GM12878 (cell line): ENCODE measurements at regions of chr10 and their contacts with region 1.

Region 1: DNA sequence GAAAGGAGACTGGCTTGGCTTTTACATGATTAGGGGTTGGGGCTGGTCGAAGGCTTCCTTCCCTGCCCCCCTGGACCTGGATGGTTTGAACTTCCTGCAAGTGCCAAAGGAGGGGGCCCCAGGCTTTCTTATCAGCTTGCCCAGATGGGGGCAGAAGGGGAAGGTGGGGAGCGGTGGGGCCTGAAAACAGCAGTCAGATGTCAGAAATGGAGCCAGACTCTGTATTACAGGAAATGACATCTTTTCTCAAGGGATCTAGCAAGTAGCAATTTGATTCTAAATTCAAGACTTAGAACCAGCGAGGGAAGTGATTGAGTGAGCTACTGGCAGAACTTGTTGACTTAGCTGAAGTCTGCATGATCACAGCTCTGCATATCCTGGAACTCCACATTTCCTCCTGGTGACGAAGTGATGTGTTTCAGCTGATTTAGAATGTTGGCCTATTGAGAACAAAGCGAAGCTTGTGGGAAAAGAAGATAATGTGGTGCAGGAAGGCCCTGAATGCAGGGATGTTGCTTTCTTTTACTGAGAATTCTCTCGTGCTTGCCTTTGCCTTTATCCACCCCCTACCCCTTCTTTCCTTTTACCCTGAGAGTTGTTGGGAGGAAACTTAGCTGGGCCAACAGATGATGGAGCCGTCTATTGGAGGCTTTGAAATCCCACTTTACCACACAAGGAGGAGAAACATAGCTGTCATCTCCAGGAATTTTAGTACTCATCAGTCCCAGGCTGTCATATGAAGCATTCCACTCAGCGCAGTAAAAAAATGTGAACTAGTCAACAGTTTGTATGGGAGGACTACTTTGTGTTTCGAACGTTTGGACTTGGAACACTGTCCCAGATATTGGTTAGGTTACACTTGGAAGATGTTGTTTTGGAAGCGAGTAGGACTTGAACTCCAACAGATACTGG is 43.2 kb downstream of the CCNY start:
- DNase-seq: peak; percentile 60
- ATAC-seq: peak; percentile 90
- H3K4me3 ChIP-seq: peak overlapping the region; percentile 46; the same call in 1 of the 2 replicates
- H3K27ac ChIP-seq: peak overlapping the region; percentile 67
- H3K4me1 ChIP-seq: peaks cover 20% of the 10 kb centered on the region
- H3K27me3 ChIP-seq: no peaks in the 10 kb centered on the region
- CTCF ChIP-seq: peak; percentile 30 to 45 (median 41); a peak in 4 of 6 replicates
- EP300 ChIP-seq: 0 out of 4 replicates have a peak, but pooled peaks of 1 of the 2 experiments have one; percentile 11
- POLR2A ChIP-seq: no peak
- RAD21 ChIP-seq: peak; percentile 89

Region 2: GRCh38 chr10:35244549-35244948 is 134.9 kb before region 1 on chr10:
- CTCF ChIA-PET with region 1: interaction called, 6 read pairs
- POLR2A ChIA-PET with region 1: no interaction called
- RAD21 ChIA-PET with region 1: no interaction called
- SMC1A ChIA-PET with region 1: interaction called, 4 read pairs
- in situ Hi-C with region 1: no loop called
- intact Hi-C with region 1: loop called (anchors 5 kb)
- DNase-seq: no peak
- ATAC-seq: no peak
- H3K4me3 ChIP-seq: no peak overlapping the region
- H3K27ac ChIP-seq: no peak overlapping the region
- H3K4me1 ChIP-seq: no peaks in the 10 kb centered on the region
- H3K27me3 ChIP-seq: no peaks in the 10 kb centered on the region
- CTCF ChIP-seq: no peak
- EP300 ChIP-seq: no peak
- POLR2A ChIP-seq: no peak
- RAD21 ChIP-seq: no peak

Region 3: DNA sequence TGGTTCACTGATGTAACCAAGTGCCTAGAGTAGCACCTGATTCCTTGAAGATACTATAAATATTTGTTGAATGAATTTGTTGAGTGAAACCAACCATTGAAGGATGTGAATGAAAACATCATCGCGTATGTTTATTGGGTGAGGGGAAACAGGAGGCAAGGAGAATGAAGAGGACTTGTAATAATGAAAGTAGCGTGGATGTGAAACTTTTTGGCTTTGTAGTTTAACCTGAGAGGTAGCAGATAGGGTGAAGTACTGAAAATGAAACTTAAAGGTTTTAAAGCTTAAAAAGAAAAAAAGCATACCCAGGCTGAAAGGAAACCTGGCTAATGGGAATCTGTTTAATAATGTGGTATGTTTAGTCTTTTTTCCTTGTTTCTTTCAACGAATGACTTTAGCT is 38.0 kb before region 1 on chr10:
- CTCF ChIA-PET with region 1: interaction called, 3 read pairs
- POLR2A ChIA-PET with region 1: no interaction called
- RAD21 ChIA-PET with region 1: interaction called, 3 read pairs
- SMC1A ChIA-PET with region 1: interaction called, 9 read pairs
- in situ Hi-C with region 1: no loop called
- intact Hi-C with region 1: loop called (anchors 1 kb)
- DNase-seq: peak; percentile 80
- ATAC-seq: peak; percentile 80
- H3K4me3 ChIP-seq: peak overlapping the region; percentile 55
- H3K27ac ChIP-seq: peak overlapping the region; percentile 73; the same call in 1 of the 2 replicates
- H3K4me1 ChIP-seq: peaks cover 24% of the 10 kb centered on the region
- H3K27me3 ChIP-seq: no peaks in the 10 kb centered on the region
- CTCF ChIP-seq: no peak
- EP300 ChIP-seq: peak in 1 of 2 experiments; percentile 66; a peak in 1 of 4 replicates
- POLR2A ChIP-seq: no peak
- RAD21 ChIP-seq: peak; percentile 12; the same call in 1 of the 2 replicates

Region 4: GRCh38 chr10:35351021-35351420 is 28.5 kb before region 1 on chr10:
- CTCF ChIA-PET with region 1: interaction called, 18 read pairs
- POLR2A ChIA-PET with region 1: no interaction called
- RAD21 ChIA-PET with region 1: interaction called, 7 read pairs
- SMC1A ChIA-PET with region 1: interaction called, 13 read pairs
- in situ Hi-C with region 1: no loop called
- intact Hi-C with region 1: no loop called
- DNase-seq: no peak
- ATAC-seq: peak; percentile 82
- H3K4me3 ChIP-seq: no peak overlapping the region
- H3K27ac ChIP-seq: no peak overlapping the region
- H3K4me1 ChIP-seq: peaks cover 35% of the 10 kb centered on the region
- H3K27me3 ChIP-seq: no peaks in the 10 kb centered on the region
- CTCF ChIP-seq: no peak
- EP300 ChIP-seq: no peak
- POLR2A ChIP-seq: no peak
- RAD21 ChIP-seq: no peak

Region 5: DNA sequence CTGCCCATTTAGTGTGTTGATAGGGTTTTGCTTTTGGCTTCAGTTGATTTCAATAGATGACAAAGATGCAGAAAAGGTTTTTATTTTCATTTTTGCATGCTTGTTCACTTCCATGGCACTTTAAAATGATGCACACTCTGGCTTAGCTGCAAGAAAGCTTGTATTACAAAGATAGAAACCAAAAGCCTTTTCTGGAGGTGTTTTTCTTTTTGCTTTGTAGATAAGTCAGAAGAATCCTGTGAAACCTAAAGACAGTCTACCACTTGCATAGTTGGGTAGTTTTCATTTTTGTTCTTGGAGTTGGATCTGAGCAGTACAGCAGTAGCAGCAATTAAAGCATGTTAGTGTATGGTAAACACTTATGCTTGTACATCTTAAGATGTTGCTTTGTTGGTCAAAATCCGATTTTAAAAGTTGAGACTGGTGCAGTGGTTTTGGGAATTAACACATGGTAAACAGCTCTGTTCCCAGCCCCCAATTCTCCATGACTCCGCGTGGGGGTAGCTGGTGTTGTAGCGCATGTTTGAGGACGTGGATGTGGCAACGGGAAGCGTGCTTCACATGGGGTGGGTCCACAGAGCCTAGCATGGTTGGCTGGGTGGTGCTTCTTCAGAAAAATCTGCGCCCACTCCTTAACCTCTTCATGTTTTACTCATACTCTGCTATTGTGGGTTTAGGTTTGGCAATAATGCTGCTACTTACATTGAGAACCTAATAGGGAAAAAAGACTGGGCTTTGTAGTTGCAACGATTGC is 23.3 kb before region 1 on chr10:
- CTCF ChIA-PET with region 1: interaction called, 18 read pairs
- POLR2A ChIA-PET with region 1: no interaction called
- RAD21 ChIA-PET with region 1: interaction called, 7 read pairs
- SMC1A ChIA-PET with region 1: interaction called, 13 read pairs
- in situ Hi-C with region 1: no loop called
- intact Hi-C with region 1: no loop called
- DNase-seq: peak; percentile 53
- ATAC-seq: peak; percentile 60
- H3K4me3 ChIP-seq: peak overlapping the region; percentile 8; the same call in 1 of the 2 replicates
- H3K27ac ChIP-seq: 0 out of 2 replicates have a peak overlapping the region, but pooled peaks have one; percentile 22
- H3K4me1 ChIP-seq: peaks cover 33% of the 10 kb centered on the region
- H3K27me3 ChIP-seq: no peaks in the 10 kb centered on the region
- CTCF ChIP-seq: no peak
- EP300 ChIP-seq: no peak
- POLR2A ChIP-seq: no peak
- RAD21 ChIP-seq: 0 out of 2 replicates have a peak, but pooled peaks have one; percentile 4

Region 6: DNA sequence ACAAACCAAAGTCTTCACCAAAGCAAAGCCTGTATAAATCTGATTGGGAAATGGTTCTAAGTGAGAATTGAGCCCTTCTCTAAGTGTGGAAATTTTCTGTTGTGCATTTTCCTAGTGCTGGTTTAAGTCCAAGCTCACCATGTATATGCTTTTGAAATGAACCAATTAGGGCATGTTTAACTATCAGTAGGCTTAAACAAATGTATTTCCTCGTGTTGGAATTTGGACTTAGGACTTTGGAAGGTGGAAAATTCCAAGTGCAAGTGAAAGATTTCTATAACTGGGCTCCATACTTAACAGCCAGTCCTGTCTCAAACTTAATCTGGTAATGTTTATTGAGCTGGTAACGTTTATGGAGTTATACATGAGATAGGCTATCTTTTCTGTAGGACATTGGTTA is 14.7 kb before region 1 on chr10:
- CTCF ChIA-PET with region 1: interaction called, 3 read pairs
- POLR2A ChIA-PET with region 1: no interaction called
- RAD21 ChIA-PET with region 1: no interaction called
- SMC1A ChIA-PET with region 1: interaction called, 13 read pairs
- in situ Hi-C with region 1: no loop called
- intact Hi-C with region 1: no loop called
- DNase-seq: no peak
- ATAC-seq: no peak
- H3K4me3 ChIP-seq: no peak overlapping the region
- H3K27ac ChIP-seq: no peak overlapping the region
- H3K4me1 ChIP-seq: no peaks in the 10 kb centered on the region
- H3K27me3 ChIP-seq: no peaks in the 10 kb centered on the region
- CTCF ChIP-seq: no peak
- EP300 ChIP-seq: no peak
- POLR2A ChIP-seq: no peak
- RAD21 ChIP-seq: no peak